Activated naive CD4-positive, alpha-beta T cell treated with anti-CD3 and anti-CD28 coated beads for 36 hours (primary cell): ENCODE measurements at regions of chr15 and their contacts with region 1.

Region 1: GRCh38 chr15:40893733-40894688 is at the start of gene VPS18:
- DNase-seq: peak; percentile 99
- H3K4me3 Mint-ChIP-seq: peak within 1 kb of the TSS; percentile 97
- H3K27ac Mint-ChIP-seq: peak within 1 kb of the TSS; percentile 79
- H3K4me1 Mint-ChIP-seq: peaks cover 28% of the 10 kb centered on the region
- H3K27me3 Mint-ChIP-seq: no peaks in the 10 kb centered on the region
- total RNA-seq, gene VPS18: 3.3 to 3.4 TPM

Region 2: GRCh38 chr15:40564591-40565332 is 329.2 kb before region 1 on chr15 and contains the start of gene CCDC32:
- CTCF ChIA-PET with region 1: interaction called, 3 read pairs
- intact Hi-C with region 1: loop called (anchors 1 kb)
- DNase-seq: peak; percentile 98
- H3K4me3 Mint-ChIP-seq: peak within 1 kb of the TSS; percentile 96
- H3K27ac Mint-ChIP-seq: peak within 1 kb of the TSS; percentile 90
- H3K4me1 Mint-ChIP-seq: peaks cover 45% of the 10 kb centered on the region
- H3K27me3 Mint-ChIP-seq: no peaks in the 10 kb centered on the region
- total RNA-seq, gene CCDC32: 25.4 to 25.8 TPM

Region 3: GRCh38 chr15:40694688-40695468 is 199.1 kb before region 1 on chr15 and contains the start of gene RAD51:
- CTCF ChIA-PET with region 1: interaction called, 12 read pairs
- intact Hi-C with region 1: loop called (anchors 1 kb)
- DNase-seq: peak; percentile 96
- H3K4me3 Mint-ChIP-seq: peak within 1 kb of the TSS; percentile 99
- H3K27ac Mint-ChIP-seq: peak within 1 kb of the TSS; percentile 99
- H3K4me1 Mint-ChIP-seq: peaks cover 25% of the 10 kb centered on the region
- H3K27me3 Mint-ChIP-seq: no peaks in the 10 kb centered on the region
- total RNA-seq, gene RAD51: 65.8 to 68.8 TPM

Region 4: GRCh38 chr15:40782580-40783227 is 111.3 kb before region 1 on chr15:
- CTCF ChIA-PET with region 1: interaction called, 6 read pairs
- intact Hi-C with region 1: loop called (anchors 2 kb)
- DNase-seq: peak; percentile 88
- H3K4me3 Mint-ChIP-seq: no peak overlapping the region
- H3K27ac Mint-ChIP-seq: no peak overlapping the region
- H3K4me1 Mint-ChIP-seq: peaks cover 18% of the 10 kb centered on the region
- H3K27me3 Mint-ChIP-seq: no peaks in the 10 kb centered on the region

Region 5: DNA sequence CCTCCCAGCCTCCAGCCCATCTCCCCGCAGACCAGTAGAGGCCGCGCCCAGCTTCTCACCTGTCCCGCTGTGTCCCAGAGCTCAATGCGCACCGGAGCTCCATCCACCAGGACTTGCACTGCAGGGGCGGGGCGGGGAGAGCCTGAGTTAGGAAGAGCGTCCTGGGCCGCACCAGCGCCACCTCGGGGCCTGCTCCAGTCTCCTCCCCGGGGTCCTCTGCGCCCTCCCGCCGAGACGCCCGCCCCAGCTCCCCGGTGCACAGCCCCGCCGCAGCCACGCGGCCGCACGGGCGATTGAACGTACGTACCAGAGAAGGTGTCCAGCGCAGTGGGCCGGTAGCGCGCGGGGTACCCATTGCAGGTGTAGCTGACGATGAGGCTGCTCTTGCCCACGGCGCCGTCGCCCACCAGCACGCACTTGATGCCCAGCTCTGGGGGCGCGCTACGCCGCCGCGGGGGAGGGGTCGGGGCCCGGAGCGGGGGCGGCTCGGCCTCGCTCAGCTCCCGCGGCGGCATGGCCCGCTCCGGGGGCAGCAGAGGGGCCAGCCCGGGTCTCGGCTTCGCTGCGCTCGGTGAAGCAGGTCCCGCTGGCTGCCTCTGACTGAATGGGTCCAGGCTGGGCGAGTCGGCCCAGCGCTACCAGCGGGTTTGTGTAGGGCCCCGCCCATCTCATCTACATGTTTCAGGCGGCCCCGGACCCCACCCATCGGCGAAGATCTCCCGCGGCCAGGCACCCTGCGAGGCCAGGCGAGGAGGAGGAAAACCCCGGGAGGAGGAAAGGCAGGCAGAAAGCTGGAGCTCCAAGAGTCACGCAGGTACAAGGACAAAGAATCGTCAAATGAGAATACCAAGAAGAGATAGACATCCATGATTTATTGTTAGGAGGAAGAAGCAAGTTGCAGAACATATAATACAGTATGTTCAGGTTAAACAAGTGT is 20.1 kb before region 1 on chr15 and contains the start of gene RHOV:
- CTCF ChIA-PET with region 1: interaction called, 33 read pairs
- intact Hi-C with region 1: loop called (anchors 1 kb)
- DNase-seq: peak; percentile 61
- H3K4me3 Mint-ChIP-seq: peak within 1 kb of the TSS; percentile 73
- H3K27ac Mint-ChIP-seq: no peak within 1 kb of the TSS
- H3K4me1 Mint-ChIP-seq: peaks cover 19% of the 10 kb centered on the region
- H3K27me3 Mint-ChIP-seq: peaks cover 10% of the 10 kb centered on the region
- total RNA-seq, gene RHOV: 0.22 TPM in 1 of 2 experiments, not detected in the other

Region 6: DNA sequence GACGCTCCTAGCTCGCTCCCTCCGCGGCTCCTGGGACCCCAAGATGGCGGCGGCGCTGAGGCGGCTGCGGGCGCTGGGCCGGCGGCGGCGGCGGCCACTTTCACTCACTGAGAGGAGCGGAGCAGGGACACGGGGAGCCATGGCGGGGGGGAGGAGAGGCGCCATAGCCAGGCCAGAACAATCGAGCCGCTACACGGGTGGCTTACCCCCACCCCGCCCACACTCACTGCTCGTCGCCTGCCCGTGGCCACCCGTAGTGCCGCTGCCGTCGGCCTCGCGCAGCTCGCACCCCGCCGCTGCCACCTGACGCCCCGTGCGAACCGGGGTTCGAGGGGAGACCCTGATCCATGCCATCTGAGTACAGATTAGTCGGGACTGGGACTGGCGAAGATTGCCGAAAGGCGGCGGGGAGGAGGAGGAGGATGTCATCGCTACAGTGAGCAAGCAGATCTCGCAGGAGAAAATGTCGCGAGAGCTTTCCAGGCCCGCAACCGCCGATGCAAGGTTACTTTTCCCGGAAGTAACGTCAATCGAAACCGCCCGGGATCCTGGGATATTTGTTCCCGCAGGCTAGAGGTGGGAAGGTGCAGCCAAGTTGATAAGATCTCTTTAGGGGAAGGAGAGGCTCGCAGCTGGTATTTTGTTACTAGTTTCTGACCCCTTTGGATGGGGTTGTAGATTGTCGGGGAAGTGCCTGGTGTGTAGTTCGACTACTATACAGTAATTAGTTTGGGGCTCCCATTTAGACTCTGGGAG is 222.3 kb after region 1 on chr15 and contains the start of gene INO80:
- CTCF ChIA-PET with region 1: no interaction called
- intact Hi-C with region 1: loop called (anchors 1 kb)
- DNase-seq: peak; percentile 99
- H3K4me3 Mint-ChIP-seq: peak within 1 kb of the TSS; percentile 88
- H3K27ac Mint-ChIP-seq: peak within 1 kb of the TSS; percentile 96
- H3K4me1 Mint-ChIP-seq: peaks cover 21% of the 10 kb centered on the region
- H3K27me3 Mint-ChIP-seq: no peaks in the 10 kb centered on the region
- total RNA-seq, gene INO80: 14.0 to 16.8 TPM